ENCODE measurements at regions of chr10 and their contacts with region 1.

Region 1: DNA sequence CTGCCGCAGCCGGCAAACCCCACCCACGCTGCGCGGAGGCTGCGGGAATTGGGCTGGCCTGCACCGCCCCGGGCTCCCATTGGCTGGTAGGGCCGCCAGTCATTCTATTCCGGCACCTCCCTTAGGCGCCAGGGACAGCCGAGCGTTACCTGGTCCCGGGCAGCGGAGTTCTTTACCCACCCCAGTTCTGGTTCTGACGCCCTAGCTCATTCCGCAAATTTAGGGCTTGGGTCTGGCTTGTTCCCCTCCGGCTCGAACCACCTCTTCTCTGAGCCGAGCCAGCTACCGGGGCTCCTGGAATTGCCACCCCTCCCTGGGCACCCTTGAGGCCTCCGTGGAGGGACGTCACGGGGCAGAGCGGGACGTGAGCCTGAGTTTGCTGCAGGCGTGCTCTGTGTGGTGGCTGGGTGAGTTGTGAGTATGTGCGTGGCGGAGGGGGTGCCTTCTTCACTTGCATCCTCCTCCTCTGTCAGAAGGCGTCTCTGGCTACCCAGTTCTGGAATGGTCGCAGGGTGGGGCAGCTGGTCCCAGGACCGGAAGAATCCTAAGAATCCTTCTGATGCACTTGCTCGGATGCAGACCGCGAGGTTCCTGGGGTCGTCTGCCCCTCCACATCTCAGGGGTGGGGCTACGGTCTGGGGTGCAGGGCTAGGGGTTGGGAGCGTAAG is at the starts of genes PDZD7 and SFXN3:
- DNase-seq: peak; percentile 79
- ATAC-seq: peak; percentile 90
- H3K4me3 ChIP-seq: peak within 1 kb of the TSS; percentile 73 to 80 (median 74)
- H3K27ac ChIP-seq: peak within 1 kb of the TSS; percentile 65
- H3K4me1 ChIP-seq: peaks cover 66% of the 10 kb centered on the region
- H3K27me3 ChIP-seq: no peaks in the 10 kb centered on the region; a peak in 1 of 5 replicates
- CTCF ChIP-seq: no peak
- EP300 ChIP-seq: no peak
- POLR2A ChIP-seq: no peak
- RAD21 ChIP-seq: no peak
- total RNA-seq, gene PDZD7: 0.60 and 0.73 TPM in 2 replicates
- total RNA-seq, gene SFXN3: 11.9 and 16.8 TPM in 2 replicates

Region 2: GRCh38 chr10:101018600-101019439 is 12.4 kb before region 1 on chr10:
- CTCF ChIA-PET with region 1: no interaction called
- POLR2A ChIA-PET with region 1: interaction called, 20 read pairs
- in situ Hi-C with region 1: no loop called
- intact Hi-C with region 1: no loop called
- DNase-seq: peak; percentile 72
- ATAC-seq: peak; percentile 91
- H3K4me3 ChIP-seq: peak overlapping the region; percentile 25 to 69 (median 55); a peak in 5 of 6 replicates
- H3K27ac ChIP-seq: no peak overlapping the region
- H3K4me1 ChIP-seq: peaks cover 34% of the 10 kb centered on the region
- H3K27me3 ChIP-seq: peaks cover 1 to 13% of the 10 kb centered on the region in 2 experiments; a peak in 2 of 5 replicates
- CTCF ChIP-seq: peak; percentile 100
- EP300 ChIP-seq: no peak
- POLR2A ChIP-seq: no peak
- RAD21 ChIP-seq: peak; percentile 85

Region 3: GRCh38 chr10:101060036-101060950 is 29.0 kb after region 1 on chr10:
- CTCF ChIA-PET with region 1: no interaction called
- POLR2A ChIA-PET with region 1: interaction called, 23 read pairs
- in situ Hi-C with region 1: loop called (anchors 5 kb)
- intact Hi-C with region 1: loop called (anchors 5 kb)
- DNase-seq: peak; percentile 96
- ATAC-seq: peak; percentile 33
- H3K4me3 ChIP-seq: peak overlapping the region; percentile 82 to 97 (median 87)
- H3K27ac ChIP-seq: peak overlapping the region; percentile 99
- H3K4me1 ChIP-seq: peaks cover 71% of the 10 kb centered on the region
- H3K27me3 ChIP-seq: no peaks in the 10 kb centered on the region; a peak in 1 of 5 replicates
- CTCF ChIP-seq: peak; percentile 89
- EP300 ChIP-seq: no peak
- POLR2A ChIP-seq: peak in 1 of 2 experiments; percentile 45; a peak in 1 of 4 replicates
- RAD21 ChIP-seq: peak; percentile 88